ENCODE measurements at regions of chr3 and their contacts with region 1.

Region 1: GRCh38 chr3:183385698-183386613 is 42.5 kb downstream of the MCF2L2 start:
- DNase-seq: no peak
- H3K4me3 ChIP-seq: no peak overlapping the region
- H3K27ac ChIP-seq: no peak overlapping the region
- H3K4me1 ChIP-seq: peaks cover 0 to 3% (median 0%) of the 10 kb centered on the region in 4 donors
- H3K27me3 ChIP-seq: no peaks in the 10 kb centered on the region
- CTCF ChIP-seq: peak; percentile 28 to 79 (median 61)
- EP300 ChIP-seq: no peak
- POLR2A ChIP-seq: no peak

Region 2: GRCh38 chr3:183122257-183122932 is 263.6 kb before region 1 on chr3:
- intact Hi-C with region 1: loop called (anchors 1 kb)
- DNase-seq: no peak
- H3K4me3 ChIP-seq: no peak overlapping the region
- H3K27ac ChIP-seq: no peak overlapping the region
- H3K4me1 ChIP-seq: no peaks in the 10 kb centered on the region
- H3K27me3 ChIP-seq: peaks cover 0 to 2% (median 0%) of the 10 kb centered on the region in 3 donors
- CTCF ChIP-seq: peak; percentile 62 to 85 (median 76)
- EP300 ChIP-seq: no peak
- POLR2A ChIP-seq: no peak

Region 3: GRCh38 chr3:183158551-183159006 is 227.4 kb before region 1 on chr3:
- intact Hi-C with region 1: no loop called
- DNase-seq: no peak
- H3K4me3 ChIP-seq: no peak overlapping the region
- H3K27ac ChIP-seq: no peak overlapping the region
- H3K4me1 ChIP-seq: peaks cover 0 to 13% (median 10%) of the 10 kb centered on the region in 4 donors
- H3K27me3 ChIP-seq: peaks cover 4 to 23% (median 6%) of the 10 kb centered on the region in 3 donors
- CTCF ChIP-seq: no peak
- EP300 ChIP-seq: no peak
- POLR2A ChIP-seq: no peak

Region 4: DNA sequence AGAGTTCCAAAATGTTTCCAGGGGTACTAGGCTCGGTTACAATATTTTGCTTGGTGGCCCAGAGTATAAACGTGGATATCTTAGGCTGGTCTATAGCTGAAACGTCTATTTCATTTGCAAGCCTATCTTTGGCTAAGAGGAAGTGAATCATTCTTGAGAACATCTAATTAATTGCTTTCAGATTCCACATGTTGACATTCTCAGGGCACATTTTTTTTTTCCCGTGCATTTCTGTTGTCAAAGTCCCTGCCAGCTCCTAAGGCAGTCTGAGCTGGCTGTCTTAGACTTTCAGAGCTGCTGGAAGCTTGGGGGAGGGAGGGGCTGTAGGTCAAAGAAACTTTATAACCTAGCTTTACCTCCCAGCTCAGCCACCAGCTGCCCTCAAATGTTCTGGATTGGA is 200.3 kb before region 1 on chr3:
- intact Hi-C with region 1: loop called (anchors 2 kb)
- DNase-seq: no peak
- H3K4me3 ChIP-seq: no peak overlapping the region
- H3K27ac ChIP-seq: no peak overlapping the region
- H3K4me1 ChIP-seq: peaks cover 0 to 6% (median 0%) of the 10 kb centered on the region in 4 donors
- H3K27me3 ChIP-seq: peaks cover 0 to 9% (median 0%) of the 10 kb centered on the region in 3 donors
- CTCF ChIP-seq: no peak
- EP300 ChIP-seq: no peak
- POLR2A ChIP-seq: no peak

Region 5: GRCh38 chr3:183252973-183253901 is 132.7 kb before region 1 on chr3 and contains the start of gene B3GNT5:
- intact Hi-C with region 1: loop called (anchors 5 kb)
- DNase-seq: peak; percentile 91
- H3K4me3 ChIP-seq: peak within 1 kb of the TSS; percentile 49 to 87 (median 64)
- H3K27ac ChIP-seq: peak within 1 kb of the TSS; percentile 70 to 84 (median 80)
- H3K4me1 ChIP-seq: peaks cover 0 to 13% (median 9%) of the 10 kb centered on the region in 4 donors
- H3K27me3 ChIP-seq: no peaks in the 10 kb centered on the region
- CTCF ChIP-seq: no peak
- EP300 ChIP-seq: no peak
- POLR2A ChIP-seq: peak in 1 of 2 donors; percentile 28
- total RNA-seq, gene B3GNT5: 2.2 to 4.2 (median 3.2) TPM

Region 6: DNA sequence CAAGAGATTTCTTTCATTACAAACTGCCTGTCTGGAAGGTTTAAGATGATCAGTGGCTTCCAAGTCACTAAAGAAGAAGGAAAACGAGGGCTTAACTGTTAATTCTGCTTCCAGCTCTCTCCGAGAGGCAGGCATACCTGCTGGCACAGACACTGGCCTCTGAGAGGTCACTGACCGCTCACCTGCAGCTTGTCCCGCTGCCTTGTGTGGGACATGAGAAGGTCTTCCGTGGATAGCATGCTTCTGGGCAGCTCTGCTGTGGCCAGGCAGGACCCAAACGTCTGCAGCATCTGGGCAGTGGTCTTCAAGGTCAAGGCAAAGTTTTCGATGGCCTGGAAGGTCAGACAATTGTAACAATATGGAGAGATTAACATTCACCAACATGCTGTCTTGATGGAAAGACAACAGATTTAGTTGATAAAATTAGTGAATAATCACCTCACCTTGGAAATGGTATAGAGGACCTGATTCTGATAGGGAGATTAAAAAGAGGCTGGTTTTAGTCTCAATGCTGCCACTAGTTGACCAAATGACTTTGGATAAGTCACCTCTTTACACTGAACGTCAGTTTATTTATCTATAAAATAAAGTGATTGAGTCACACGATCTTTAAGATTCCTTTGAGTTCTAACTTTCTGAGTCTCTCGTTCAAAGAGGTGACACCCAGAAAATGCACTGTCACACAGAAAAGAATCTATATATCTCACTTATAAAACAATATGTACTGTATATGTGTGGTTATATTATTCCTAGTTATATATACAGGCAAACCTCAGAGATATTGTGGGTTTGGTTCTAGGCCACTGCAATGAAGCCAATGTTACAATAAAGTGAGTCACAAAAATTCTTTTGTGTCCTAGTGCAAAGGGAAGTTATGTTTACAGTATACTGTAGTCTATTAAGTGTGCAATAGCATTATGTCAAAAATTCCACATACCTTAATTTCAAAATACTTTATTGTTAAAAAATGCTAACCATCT is 67.8 kb before region 1 on chr3:
- intact Hi-C with region 1: no loop called
- DNase-seq: no peak
- H3K4me3 ChIP-seq: no peak overlapping the region
- H3K27ac ChIP-seq: no peak overlapping the region
- H3K4me1 ChIP-seq: no peaks in the 10 kb centered on the region
- H3K27me3 ChIP-seq: no peaks in the 10 kb centered on the region
- CTCF ChIP-seq: no peak
- EP300 ChIP-seq: no peak
- POLR2A ChIP-seq: no peak